Calu3 (cell line): ENCODE measurements at regions of chr11 and their contacts with region 1.

Region 1: GRCh38 chr11:63635762-63636465 is 21.7 kb upstream of the PLAAT3 start:
- DNase-seq: peak; percentile 80
- H3K4me3 Mint-ChIP-seq: no peak overlapping the region
- H3K27ac Mint-ChIP-seq: peak overlapping the region; percentile 93
- H3K4me1 Mint-ChIP-seq: peaks cover 20% of the 10 kb centered on the region
- H3K27me3 Mint-ChIP-seq: no peaks in the 10 kb centered on the region
- CTCF ChIP-seq: peak; percentile 62

Region 2: DNA sequence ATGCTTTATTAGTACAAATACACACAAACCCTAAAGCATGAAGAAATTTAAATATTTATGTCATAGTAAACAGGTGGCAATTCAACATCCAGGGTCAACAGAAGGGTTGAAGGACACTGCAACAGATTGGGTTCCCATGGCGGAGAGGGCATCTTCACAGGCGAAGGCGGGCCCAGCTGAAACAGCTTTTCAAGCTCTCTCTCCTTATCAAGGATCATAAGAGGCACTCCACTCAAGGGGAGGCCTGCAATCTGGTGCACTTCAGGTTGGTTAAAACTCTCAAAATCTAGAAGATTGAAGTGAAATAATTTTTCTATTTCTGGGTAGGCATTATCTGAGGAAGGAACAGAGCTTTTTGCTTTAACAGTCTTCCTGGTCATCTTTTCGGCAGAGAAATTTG is 603.5 kb before region 1 on chr11:
- CTCF ChIA-PET with region 1: no interaction called
- intact Hi-C with region 1: loop called (anchors 10 kb)
- DNase-seq: no peak
- H3K4me3 Mint-ChIP-seq: no peak overlapping the region
- H3K27ac Mint-ChIP-seq: no peak overlapping the region
- H3K4me1 Mint-ChIP-seq: peaks cover 8% of the 10 kb centered on the region
- H3K27me3 Mint-ChIP-seq: peaks cover 85% of the 10 kb centered on the region
- CTCF ChIP-seq: no peak

Region 3: DNA sequence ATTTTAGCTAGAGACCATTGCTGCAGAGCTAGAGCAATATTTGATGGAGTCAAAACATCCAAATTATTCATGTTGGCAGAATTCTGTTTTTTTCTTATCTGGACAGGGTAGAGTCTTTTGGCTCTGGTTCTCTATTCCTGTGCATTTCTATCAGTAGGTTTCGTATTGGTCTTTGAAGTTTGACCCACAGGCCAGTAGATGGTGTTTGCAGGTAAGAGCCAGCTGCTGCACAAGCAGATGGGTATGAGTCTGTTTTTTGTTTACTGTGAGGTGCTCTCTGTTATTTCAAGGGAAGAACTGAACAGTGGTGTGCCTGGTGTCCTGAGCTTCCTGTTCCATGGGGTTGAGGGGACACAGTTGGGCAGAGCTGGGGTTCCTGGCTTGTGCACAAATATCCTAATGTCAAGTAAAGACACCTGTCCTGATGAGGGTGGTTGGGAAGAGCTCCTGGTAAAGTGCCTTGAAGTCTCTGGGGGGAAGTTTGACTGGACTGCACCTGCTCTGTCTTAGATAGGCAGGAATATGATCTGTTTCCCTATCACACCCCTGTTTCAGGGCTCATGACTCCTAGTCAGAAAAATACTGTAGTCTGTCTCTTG is 358.5 kb before region 1 on chr11:
- CTCF ChIA-PET with region 1: interaction called, 4 read pairs
- intact Hi-C with region 1: loop called (anchors 2 kb)
- DNase-seq: peak; percentile 17
- H3K4me3 Mint-ChIP-seq: no peak overlapping the region
- H3K27ac Mint-ChIP-seq: no peak overlapping the region
- H3K4me1 Mint-ChIP-seq: no peaks in the 10 kb centered on the region
- H3K27me3 Mint-ChIP-seq: peaks cover 95% of the 10 kb centered on the region
- CTCF ChIP-seq: no peak

Region 4: DNA sequence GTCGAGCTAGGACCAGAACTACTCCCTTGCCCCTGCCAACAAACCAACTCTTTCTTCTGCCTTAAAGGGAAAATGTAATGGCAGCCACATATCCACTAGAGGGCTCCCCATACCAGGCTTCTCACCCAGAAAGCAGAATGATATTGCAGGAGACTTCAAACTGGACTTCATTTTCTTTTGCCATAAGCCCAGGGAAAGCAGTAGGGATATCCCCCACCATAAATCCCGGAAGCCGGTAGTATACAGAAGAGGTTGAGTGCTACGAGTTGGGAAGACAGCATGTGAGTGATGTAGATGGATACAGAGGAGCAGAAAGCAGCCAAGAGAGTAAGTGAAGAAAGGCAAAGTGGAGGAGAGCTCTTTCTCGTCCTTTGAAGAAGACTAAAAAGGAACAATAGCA is 157.0 kb before region 1 on chr11:
- CTCF ChIA-PET with region 1: interaction called, 21 read pairs
- intact Hi-C with region 1: loop called (anchors 1 kb)
- DNase-seq: peak; percentile 69
- H3K4me3 Mint-ChIP-seq: no peak overlapping the region
- H3K27ac Mint-ChIP-seq: no peak overlapping the region
- H3K4me1 Mint-ChIP-seq: peaks cover 40% of the 10 kb centered on the region
- H3K27me3 Mint-ChIP-seq: no peaks in the 10 kb centered on the region
- CTCF ChIP-seq: peak; percentile 80

Region 5: DNA sequence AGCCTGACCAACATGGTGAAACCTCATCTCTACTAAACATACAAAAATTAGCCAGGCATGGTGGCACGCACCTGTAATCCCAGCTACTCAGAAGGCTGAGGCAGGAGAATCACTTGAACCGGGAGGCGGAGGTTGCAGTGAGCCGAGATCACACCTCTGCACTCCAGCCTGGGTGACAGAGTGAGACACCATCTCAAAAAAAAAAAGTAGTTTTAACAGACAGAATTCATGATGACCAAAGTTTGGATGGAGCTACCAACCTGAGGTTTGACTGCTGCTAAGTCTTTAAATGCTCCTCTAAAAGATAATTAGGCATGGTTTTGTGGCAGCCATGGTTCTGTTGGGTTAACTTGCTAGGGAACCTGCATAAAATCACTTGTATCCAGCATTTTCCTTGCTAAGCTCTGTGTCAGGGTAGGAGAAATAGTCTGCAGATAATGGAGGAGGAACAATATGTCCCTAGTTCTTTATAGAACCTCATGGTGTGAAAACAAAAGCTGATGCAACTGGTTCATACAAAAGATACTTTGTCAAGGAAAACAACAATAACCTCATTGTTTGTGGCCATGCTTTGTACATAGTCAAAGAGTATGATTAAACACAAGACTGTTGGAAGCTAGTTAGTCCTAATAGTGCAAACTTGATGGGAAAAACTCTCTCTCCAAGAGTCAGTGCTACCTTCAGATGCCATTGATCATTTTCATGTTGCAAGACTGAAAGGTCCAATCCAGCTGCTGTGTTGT is 52.8 kb before region 1 on chr11:
- CTCF ChIA-PET with region 1: no interaction called
- intact Hi-C with region 1: loop called (anchors 5 kb)
- DNase-seq: no peak
- H3K4me3 Mint-ChIP-seq: no peak overlapping the region
- H3K27ac Mint-ChIP-seq: peak overlapping the region; percentile 86
- H3K4me1 Mint-ChIP-seq: peaks cover 34% of the 10 kb centered on the region
- H3K27me3 Mint-ChIP-seq: no peaks in the 10 kb centered on the region
- CTCF ChIP-seq: no peak

Region 6: DNA sequence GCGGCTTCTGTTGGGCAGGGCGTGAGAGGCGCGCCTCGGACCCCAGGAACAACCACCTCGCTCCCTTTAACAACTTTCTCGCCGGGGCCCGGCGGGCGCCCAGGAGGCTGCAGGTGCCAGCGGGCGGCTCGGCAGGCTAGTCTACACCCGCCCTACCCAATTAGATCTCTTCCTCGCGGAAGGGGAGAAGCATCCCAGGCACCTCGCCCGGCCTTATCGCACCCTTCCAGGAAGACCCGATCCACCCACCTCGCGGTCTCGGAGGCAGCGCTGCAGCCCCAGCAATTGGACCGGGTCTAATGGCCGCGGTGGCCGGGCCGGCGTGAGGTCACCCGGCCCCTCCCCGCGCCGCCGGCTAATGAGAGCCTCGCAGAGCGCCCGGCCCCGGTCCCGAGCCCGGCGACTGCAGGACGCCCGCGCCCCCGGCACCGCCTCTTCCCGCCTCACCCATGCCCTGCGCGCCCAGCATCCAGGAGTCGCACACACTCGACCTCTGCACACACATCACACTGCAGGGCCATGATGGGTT is 21.7 kb before region 1 on chr11 and contains the start of gene PLAAT3:
- CTCF ChIA-PET with region 1: no interaction called
- intact Hi-C with region 1: loop called (anchors 2 kb)
- DNase-seq: peak; percentile 88
- H3K4me3 Mint-ChIP-seq: peak within 1 kb of the TSS; percentile 92
- H3K27ac Mint-ChIP-seq: peak within 1 kb of the TSS; percentile 92
- H3K4me1 Mint-ChIP-seq: peaks cover 22% of the 10 kb centered on the region
- H3K27me3 Mint-ChIP-seq: no peaks in the 10 kb centered on the region
- CTCF ChIP-seq: no peak
- total RNA-seq, gene PLAAT3: 261 and 297 TPM in 2 replicates